MCF 10A (cell line): ENCODE measurements at regions of chr21 and their contacts with region 1.

Region 1: DNA sequence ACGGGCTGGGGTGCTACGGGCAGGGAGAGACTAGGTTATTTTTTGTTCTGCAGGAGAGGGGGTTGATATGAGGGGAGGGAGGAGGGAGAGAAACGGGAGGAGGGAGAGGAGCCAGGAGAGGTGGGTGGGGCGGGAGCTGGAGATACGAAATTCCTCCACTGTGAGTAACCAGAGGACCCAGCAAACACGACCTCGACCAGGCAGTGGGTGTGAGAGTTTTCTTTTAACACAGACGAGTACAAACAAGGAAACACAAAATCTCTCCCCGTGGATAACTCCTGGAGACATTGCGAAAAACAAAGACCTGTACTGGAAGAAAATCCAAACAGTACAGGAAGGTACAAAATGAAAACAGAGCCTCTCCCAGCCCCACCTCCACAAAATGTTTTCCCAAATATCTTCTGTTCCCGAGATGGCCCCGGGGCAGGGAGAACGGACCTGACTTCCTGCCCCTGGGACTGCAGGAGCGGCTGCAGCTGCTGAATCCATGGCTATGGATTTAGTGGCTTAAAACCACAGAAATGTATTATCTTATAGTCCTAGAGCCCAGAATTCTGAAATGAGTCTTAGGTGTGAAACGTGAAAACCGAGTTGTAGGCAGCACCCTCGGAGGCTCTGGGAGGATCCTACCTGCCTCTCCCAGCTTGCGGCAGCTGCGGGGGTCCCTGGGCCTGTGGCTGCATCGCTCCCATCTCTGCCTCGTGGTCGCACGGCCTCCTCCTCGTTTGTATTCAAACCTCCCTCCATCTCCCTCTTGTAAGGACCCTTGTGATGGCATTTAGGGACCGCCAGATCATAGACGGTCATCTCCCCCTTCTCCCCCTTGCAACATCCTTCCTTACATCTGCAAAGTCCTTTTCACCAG is 82.2 kb downstream of the RIPK4 start:
- DNase-seq: peak; percentile 72
- H3K4me3 Mint-ChIP-seq: peak overlapping the region; percentile 57
- H3K27ac Mint-ChIP-seq: peak overlapping the region; percentile 86
- H3K4me1 Mint-ChIP-seq: peaks cover 44% of the 10 kb centered on the region
- H3K27me3 Mint-ChIP-seq: no peaks in the 10 kb centered on the region
- CTCF ChIP-seq: no peak

Region 2: DNA sequence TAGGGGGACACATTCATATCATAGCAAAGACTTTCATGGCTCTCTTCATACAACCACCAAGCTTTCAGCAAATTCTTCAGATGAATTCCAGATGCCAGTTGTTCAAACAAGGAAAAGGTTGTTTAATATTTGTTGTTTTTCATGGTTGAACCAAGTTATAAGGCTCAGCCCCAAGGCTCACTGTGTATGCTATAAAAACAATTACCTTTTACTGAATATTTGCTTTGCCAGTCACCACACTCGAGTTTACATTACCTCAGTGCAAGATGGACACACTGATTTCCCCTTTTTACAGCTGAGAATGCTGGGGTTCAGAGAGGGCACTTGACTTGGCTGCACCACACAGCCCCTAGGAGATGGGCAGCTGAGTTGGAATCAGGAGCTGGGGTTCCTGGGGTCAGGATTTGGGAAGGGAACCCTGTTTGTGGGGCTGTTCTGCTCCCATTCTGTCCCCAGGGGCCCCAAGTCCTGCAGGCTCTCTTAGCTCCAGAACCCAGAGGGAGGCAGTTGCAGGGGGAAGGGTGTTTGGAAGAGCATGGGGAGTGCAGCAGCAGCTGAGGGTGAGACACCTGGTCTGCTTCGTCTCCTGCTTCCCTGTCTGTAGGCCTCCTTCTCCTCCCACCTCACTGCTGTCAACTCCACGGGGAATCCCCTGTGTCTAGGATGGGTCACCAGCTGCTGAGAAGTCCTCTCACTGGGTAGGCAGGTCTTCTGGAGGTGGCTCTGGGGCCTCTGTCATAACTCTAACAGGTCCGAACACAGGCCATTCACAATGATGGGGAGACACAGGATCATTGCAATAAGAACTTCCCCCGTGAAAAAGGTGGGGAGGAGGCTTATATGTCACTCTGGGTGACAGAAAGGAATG is 163.8 kb before region 1 on chr21:
- CTCF ChIA-PET with region 1: no interaction called
- POLR2A ChIA-PET with region 1: no interaction called
- intact Hi-C with region 1: no loop called
- DNase-seq: no peak
- H3K4me3 Mint-ChIP-seq: no peak overlapping the region
- H3K27ac Mint-ChIP-seq: no peak overlapping the region
- H3K4me1 Mint-ChIP-seq: no peaks in the 10 kb centered on the region
- H3K27me3 Mint-ChIP-seq: peaks cover 3% of the 10 kb centered on the region
- CTCF ChIP-seq: no peak

Region 3: DNA sequence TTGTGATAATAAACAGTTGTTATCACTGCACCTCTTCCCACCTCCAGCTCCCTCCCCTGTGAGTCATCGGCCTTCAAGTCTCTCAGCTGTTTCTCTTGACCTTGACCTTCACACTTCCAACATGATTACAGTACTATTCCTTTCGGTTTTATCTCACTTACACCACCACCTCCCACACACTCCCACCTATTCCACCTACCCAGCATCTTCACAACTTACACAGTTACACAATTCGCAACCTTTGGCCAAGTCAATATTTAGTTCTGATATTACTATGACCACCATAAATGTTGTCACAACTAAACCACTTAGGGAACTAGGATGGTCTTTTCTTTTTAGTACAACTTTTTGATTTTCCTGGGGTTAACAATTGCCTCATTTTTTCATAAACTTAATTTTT is 22.1 kb after region 1 on chr21:
- CTCF ChIA-PET with region 1: interaction called, 3 read pairs
- POLR2A ChIA-PET with region 1: interaction called, 27 read pairs
- intact Hi-C with region 1: no loop called
- DNase-seq: peak; percentile 58
- H3K4me3 Mint-ChIP-seq: no peak overlapping the region
- H3K27ac Mint-ChIP-seq: no peak overlapping the region
- H3K4me1 Mint-ChIP-seq: peaks cover 21% of the 10 kb centered on the region
- H3K27me3 Mint-ChIP-seq: no peaks in the 10 kb centered on the region
- CTCF ChIP-seq: no peak

Region 4: GRCh38 chr21:41726945-41727783 is 42.6 kb after region 1 on chr21:
- CTCF ChIA-PET with region 1: no interaction called
- POLR2A ChIA-PET with region 1: interaction called, 13 read pairs
- intact Hi-C with region 1: loop called (anchors 2 kb)
- DNase-seq: peak; percentile 92
- H3K4me3 Mint-ChIP-seq: peak overlapping the region; percentile 55
- H3K27ac Mint-ChIP-seq: peak overlapping the region; percentile 84
- H3K4me1 Mint-ChIP-seq: peaks cover 25% of the 10 kb centered on the region
- H3K27me3 Mint-ChIP-seq: no peaks in the 10 kb centered on the region
- CTCF ChIP-seq: no peak

Region 5: GRCh38 chr21:41761211-41762181 is 76.9 kb after region 1 on chr21:
- CTCF ChIA-PET with region 1: interaction called, 10 read pairs
- POLR2A ChIA-PET with region 1: interaction called, 131 read pairs
- intact Hi-C with region 1: loop called (anchors 2 kb)
- DNase-seq: peak; percentile 86
- H3K4me3 Mint-ChIP-seq: peak overlapping the region; percentile 87
- H3K27ac Mint-ChIP-seq: peak overlapping the region; percentile 62
- H3K4me1 Mint-ChIP-seq: peaks cover 53% of the 10 kb centered on the region
- H3K27me3 Mint-ChIP-seq: no peaks in the 10 kb centered on the region
- CTCF ChIP-seq: no peak

Region 6: GRCh38 chr21:41783441-41784161 is 99.0 kb after region 1 on chr21:
- CTCF ChIA-PET with region 1: no interaction called
- POLR2A ChIA-PET with region 1: interaction called, 12 read pairs
- intact Hi-C with region 1: no loop called
- DNase-seq: peak; percentile 93
- H3K4me3 Mint-ChIP-seq: peak overlapping the region; percentile 7
- H3K27ac Mint-ChIP-seq: no peak overlapping the region
- H3K4me1 Mint-ChIP-seq: peaks cover 29% of the 10 kb centered on the region
- H3K27me3 Mint-ChIP-seq: no peaks in the 10 kb centered on the region
- CTCF ChIP-seq: no peak